ENCODE measurements at regions of chr2 and their contacts with region 1.

Region 1: DNA sequence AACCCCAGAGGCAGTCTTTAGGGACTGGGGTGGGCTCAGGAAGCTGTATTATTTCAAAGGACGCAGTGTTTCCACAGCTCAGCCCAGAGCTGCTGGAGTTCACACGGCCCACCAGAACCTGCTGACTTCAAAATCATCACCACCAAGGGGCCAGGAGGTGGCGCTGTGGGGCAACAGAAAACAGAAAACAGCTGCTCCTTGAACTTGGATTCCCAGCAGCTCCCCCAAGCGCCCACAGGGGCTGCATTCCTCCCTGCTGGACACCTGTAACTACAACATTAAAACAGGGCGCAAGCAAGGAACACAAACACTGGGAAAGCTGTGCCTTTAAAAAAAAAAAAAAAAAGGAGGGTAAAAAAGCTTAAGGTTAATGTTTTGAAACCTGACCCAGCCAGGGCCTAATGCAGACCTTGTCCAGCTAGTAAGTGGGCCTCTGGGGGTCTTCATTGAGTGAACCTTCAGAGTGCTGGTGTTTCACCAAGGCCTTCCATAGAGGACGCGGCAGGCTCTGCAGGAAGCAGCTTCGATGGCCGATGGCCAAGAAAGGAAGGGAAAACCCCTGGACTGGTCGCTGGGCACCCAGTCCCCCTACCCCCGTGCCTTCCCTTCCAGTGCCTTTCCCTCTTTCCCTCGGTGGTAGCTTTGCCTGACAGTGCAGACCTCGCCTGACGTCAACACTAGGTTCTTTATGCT is 25.9 kb downstream of the MLPH start:
- DNase-seq: peak; percentile 61
- H3K4me3 ChIP-seq: no peak overlapping the region
- H3K27ac ChIP-seq: no peak overlapping the region
- H3K4me1 ChIP-seq: no peaks in the 10 kb centered on the region
- H3K27me3 ChIP-seq: no peaks in the 10 kb centered on the region
- CTCF ChIP-seq: peak; percentile 71 to 91

Region 2: GRCh38 chr2:237558906-237559641 is 46.2 kb after region 1 on chr2:
- CTCF ChIA-PET with region 1: interaction called, 5 read pairs
- dilution Hi-C with region 1: no loop called
- in situ Hi-C with region 1: no loop called
- intact Hi-C with region 1: loop called (anchors 5 kb)
- DNase-seq: peak; percentile 60
- H3K4me3 ChIP-seq: no peak overlapping the region
- H3K27ac ChIP-seq: no peak overlapping the region
- H3K4me1 ChIP-seq: peaks cover 10% of the 10 kb centered on the region
- H3K27me3 ChIP-seq: no peaks in the 10 kb centered on the region
- CTCF ChIP-seq: peak in 1 of 2 donors; percentile 25

Region 3: DNA sequence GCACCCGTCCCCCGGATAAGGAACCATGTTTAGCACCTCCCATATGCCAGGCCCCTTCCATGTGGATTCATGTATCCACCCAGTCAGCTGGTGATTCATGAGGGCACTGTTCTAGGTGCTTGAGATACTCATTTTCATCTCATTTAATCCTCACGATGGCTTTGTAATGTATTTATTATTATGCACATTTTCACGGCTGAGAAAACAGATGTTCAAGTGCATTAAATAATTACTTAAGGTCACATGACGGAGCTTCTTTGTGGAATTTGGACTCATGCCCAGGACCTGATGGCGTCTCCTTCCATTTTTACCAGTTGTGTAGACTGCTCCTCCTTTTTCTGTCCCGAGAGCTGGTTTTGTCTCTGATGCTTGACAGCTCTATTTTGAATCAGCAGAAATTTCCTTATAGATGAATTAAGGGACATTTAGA is 213.5 kb after region 1 on chr2:
- CTCF ChIA-PET with region 1: interaction called, 13 read pairs
- dilution Hi-C with region 1: no loop called
- in situ Hi-C with region 1: no loop called
- intact Hi-C with region 1: no loop called
- DNase-seq: no peak
- H3K4me3 ChIP-seq: no peak overlapping the region
- H3K27ac ChIP-seq: no peak overlapping the region
- H3K4me1 ChIP-seq: peaks cover 24% of the 10 kb centered on the region
- H3K27me3 ChIP-seq: no peaks in the 10 kb centered on the region
- CTCF ChIP-seq: no peak

Region 4: DNA sequence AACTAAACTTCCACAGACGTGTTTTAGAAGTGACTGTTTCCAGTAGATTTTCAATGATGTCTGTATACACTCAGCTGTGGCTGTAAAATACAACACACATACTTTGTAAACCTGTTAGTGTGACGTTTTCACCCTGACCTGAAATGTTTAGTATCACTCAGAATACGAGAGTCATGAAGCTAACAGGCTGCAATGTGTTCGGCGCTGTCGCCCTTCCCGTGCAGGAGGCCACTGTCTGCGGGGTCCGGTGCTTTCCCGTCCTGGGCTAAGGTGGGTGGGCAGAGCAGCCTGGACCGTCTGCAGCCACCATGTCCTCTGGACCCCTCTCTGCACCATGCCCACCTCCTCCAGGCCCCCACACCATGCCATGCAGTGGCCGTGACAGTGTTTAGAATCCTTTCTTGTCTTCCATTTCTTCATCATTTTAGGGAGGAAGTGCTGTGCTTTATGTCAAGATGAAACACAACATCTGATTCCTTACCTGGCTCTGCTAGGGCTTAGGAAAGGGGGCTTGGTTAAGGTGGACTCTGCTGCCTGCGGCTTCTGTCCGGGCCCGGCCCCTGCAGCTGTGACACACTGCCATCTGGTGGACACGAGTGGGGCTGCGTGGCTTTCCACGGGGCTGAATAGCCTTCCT is 231.8 kb after region 1 on chr2:
- CTCF ChIA-PET with region 1: no interaction called
- dilution Hi-C with region 1: no loop called
- in situ Hi-C with region 1: no loop called
- intact Hi-C with region 1: loop called (anchors 5 kb)
- DNase-seq: peak; percentile 32
- H3K4me3 ChIP-seq: no peak overlapping the region
- H3K27ac ChIP-seq: no peak overlapping the region
- H3K4me1 ChIP-seq: no peaks in the 10 kb centered on the region
- H3K27me3 ChIP-seq: no peaks in the 10 kb centered on the region
- CTCF ChIP-seq: peak; percentile 94 to 98